Activated naive CD8-positive, alpha-beta T cell treated with anti-CD3 and anti-CD28 coated beads, Interleukin-2, amount 10 ng/mL, durations not matched to agents 7 days and 5 days (primary cell): ENCODE measurements at regions of chr7 and their contacts with region 1.

Region 1: DNA sequence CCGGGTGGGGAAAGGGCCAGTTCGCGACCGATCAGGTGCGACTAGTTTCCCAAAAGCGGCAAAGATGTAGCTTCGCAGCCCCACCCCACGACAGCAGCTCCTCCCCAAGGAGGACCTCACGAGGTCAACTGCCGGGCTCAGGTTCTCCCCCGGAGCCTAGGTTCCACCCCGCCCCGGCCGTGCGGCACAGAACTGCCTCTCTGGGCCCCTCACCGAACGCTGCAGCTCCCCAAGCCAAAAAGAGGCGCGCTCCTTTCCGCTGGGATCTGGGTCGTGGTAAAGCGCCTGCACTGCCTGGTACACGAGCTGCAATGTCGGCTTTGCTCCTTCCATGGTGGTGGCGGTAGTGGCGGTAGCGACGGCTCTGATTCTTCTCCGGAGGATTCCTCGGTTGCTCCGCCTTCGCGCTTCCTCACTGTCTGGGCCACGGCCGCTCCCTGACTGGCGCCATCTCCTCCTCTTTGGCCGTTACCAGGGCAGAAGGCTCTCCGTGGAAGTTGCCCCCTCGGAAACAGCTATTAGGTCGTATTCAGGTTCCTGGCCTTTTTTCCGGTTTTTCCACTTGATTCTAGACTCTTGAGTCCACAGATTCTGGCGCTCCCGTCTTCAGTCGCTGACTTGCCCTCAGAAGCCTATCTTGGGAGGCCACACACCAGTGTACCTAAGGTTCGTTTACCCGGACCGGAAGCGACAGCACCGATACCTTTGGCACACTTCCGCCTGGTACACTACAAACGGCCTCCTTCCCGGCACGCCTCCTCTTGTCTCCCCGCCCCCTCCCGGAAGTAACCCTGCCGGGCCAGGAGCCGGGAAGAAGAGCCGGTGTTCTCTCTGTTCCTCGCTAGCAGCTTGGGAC is at the start of gene TNPO3:
- DNase-seq: peak; percentile 89
- ATAC-seq: peak; percentile 83
- H3K4me3 Mint-ChIP-seq: peak within 1 kb of the TSS; percentile 93
- H3K27ac Mint-ChIP-seq: peak within 1 kb of the TSS; percentile 99
- H3K4me1 Mint-ChIP-seq: peaks cover 21% of the 10 kb centered on the region
- H3K27me3 Mint-ChIP-seq: peaks cover 14% of the 10 kb centered on the region
- total RNA-seq, gene TNPO3: 43.0 to 43.9 TPM

Region 2: DNA sequence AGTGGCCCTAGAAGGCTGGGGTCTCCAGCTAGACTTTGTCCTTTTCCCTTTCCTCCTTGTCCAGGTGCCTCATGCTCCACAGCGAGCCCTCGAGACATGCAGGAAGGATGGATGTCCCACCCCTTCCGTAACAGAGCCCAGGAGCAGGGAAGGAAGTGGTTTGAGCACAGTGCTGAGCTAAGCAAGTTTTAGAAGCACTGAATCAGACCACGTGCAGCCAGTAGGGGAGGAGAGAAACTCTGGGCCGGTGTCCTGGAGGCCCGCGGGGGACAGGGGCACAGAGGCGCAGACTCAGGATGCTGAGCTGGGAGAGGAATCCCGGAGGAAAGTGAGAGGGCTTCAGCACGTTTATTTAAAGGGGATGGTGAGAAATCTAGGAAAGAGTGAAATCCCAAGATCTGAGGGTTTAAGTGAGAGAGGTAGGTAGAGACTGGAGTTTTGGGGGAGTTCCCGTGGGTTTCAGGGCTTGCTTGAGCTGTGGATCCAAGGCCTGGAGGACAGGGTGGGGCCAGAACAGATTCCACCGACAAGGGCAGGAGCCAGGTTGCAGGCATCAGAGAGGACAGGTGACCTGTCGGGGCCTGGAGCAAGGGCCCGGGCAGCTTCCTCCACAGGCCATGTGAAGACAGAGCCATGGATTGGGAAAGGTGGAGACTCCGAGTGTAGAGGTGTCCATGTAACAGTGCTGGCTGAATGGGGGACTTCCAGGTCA is 121.3 kb before region 1 on chr7:
- POLR2A ChIA-PET with region 1: interaction called, 13 read pairs
- DNase-seq: peak; percentile 54
- ATAC-seq: peak; percentile 89
- H3K4me3 Mint-ChIP-seq: peak overlapping the region; percentile 76
- H3K27ac Mint-ChIP-seq: peak overlapping the region; percentile 81
- H3K4me1 Mint-ChIP-seq: peaks cover 14% of the 10 kb centered on the region
- H3K27me3 Mint-ChIP-seq: peaks cover 24% of the 10 kb centered on the region

Region 3: GRCh38 chr7:129030440-129030839 is 24.2 kb before region 1 on chr7:
- POLR2A ChIA-PET with region 1: no interaction called
- DNase-seq: no peak
- ATAC-seq: no peak
- H3K4me3 Mint-ChIP-seq: no peak overlapping the region
- H3K27ac Mint-ChIP-seq: no peak overlapping the region
- H3K4me1 Mint-ChIP-seq: peaks cover 14% of the 10 kb centered on the region
- H3K27me3 Mint-ChIP-seq: no peaks in the 10 kb centered on the region

Region 4: DNA sequence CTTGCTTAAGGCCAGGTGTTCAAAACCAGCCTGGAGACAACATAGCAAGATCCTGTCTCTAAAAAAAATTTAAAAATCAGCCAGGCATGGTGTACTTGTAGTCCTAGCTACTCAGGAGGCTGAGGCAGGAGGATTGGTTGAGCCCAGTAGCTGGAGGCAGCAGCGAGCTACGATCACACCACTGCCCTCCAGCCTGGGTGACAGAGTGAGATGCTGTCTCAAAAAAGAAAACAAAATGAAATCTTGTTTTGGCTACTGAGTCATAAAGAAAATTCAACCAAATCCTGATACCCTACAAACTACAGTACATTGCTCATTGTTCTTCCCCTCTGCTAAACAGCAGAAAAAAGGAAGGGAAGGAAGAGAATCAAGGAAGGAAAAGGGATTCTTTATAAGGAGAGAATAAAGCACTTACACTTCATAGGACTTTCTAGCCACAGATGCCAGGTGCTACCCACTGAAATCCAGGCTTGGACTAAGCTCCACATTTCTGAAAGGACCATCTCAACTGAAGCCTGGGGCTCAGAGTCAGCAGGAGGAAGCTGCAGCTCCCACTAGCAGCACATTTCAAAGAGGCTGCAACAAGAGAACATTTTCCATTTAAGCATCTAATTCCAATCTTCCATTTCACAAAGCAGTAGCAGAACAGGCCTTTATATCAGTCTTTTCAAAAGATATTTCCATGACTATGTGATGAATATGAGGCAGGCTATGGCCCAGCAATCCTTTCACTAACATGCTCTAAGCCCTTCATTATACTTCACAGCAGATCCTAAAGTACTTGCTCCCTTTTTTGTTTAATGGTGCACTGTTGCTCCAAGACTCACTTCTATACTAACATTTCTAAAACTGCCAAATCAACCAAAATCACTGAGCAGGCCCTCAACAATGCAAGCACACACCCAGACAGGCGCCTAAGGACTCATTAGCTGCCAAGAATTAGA is 13.3 kb before region 1 on chr7:
- POLR2A ChIA-PET with region 1: interaction called, 15 read pairs
- DNase-seq: no peak
- ATAC-seq: no peak
- H3K4me3 Mint-ChIP-seq: no peak overlapping the region
- H3K27ac Mint-ChIP-seq: peak overlapping the region; percentile 4
- H3K4me1 Mint-ChIP-seq: peaks cover 38% of the 10 kb centered on the region
- H3K27me3 Mint-ChIP-seq: no peaks in the 10 kb centered on the region

Region 5: GRCh38 chr7:129069021-129069420 is 14.4 kb after region 1 on chr7:
- POLR2A ChIA-PET with region 1: interaction called, 10 read pairs
- DNase-seq: no peak
- ATAC-seq: peak; percentile 58
- H3K4me3 Mint-ChIP-seq: peak overlapping the region; percentile 14
- H3K27ac Mint-ChIP-seq: no peak overlapping the region
- H3K4me1 Mint-ChIP-seq: peaks cover 16% of the 10 kb centered on the region
- H3K27me3 Mint-ChIP-seq: peaks cover 32% of the 10 kb centered on the region

Region 6: DNA sequence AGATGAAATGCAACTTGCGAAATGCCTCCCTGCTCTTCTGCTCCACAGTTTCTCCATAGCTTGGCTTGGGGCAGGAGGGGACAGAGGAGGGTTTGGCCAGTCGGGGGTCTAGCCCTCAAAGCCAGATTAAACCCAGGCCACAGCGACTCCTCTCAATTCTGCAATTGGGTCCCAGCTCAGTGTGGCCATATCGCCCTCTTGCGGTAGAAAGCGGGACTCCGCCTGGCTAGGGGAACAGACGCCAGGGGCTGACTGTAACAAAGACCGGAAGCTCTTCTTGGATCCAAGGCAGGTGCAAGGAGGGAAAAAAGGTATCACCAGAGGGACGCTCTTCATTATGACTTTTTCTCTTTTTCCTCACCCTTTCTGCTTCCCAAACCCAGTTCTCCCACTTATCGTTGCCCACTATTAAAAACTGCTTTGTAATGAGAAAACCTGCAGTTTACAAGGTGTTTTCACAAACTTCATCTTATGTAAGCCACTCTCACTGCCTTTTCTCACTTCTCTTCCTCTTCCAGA is 36.9 kb after region 1 on chr7:
- POLR2A ChIA-PET with region 1: interaction called, 10 read pairs
- DNase-seq: peak; percentile 92
- ATAC-seq: peak; percentile 69
- H3K4me3 Mint-ChIP-seq: no peak overlapping the region
- H3K27ac Mint-ChIP-seq: no peak overlapping the region
- H3K4me1 Mint-ChIP-seq: peaks cover 30% of the 10 kb centered on the region
- H3K27me3 Mint-ChIP-seq: peaks cover 2% of the 10 kb centered on the region